ENCODE measurements at regions of chr5 and their contacts with region 1.

Region 1: DNA sequence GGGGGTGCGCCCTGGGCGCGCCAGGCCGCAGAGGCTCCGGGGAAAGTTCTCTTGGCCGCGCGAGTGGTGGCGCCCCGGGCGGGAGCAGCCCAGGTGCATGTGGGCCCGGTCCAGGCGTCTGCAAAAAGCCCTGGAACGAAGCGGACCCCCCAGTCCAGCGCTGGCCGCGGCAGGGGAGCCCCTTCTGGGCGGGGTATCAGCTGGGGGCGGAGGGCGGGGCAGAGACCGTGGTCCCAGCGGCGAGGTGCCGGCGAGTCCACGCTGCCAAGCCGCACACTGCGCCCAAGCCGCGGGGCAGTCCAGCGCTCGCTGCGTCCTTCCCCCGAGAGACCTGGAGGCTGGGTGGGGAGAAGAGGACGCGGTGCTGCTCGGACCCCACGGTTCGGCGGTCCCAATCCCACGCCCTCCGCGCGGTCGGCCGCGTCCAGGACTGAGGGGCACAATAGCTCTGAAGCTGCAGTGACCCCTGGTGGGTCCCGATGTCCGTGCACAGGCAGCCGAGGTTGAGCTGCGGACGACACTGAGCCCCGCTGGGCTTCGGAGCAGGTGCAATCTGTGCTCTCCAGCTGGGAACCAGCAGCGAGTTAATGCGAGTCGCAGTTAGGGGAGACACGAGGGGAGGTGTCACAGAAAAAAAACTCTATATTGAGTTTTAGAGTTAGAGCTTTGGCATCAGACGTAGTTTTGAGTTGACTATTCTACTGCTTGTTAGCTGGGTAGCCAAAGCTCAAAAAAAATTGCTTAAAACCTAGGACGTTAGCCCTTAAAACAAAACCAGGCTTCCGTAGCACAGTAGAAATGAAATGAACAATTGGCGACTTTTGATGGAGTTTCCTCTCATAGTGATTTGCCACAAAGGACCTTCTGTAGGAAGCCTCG is 1.1 kb upstream of the EPB41L4A start:
- DNase-seq: peak in 1 of 2 donors; percentile 90
- H3K4me3 ChIP-seq: peak overlapping the region; percentile 82 to 91
- H3K27ac ChIP-seq: peak overlapping the region; percentile 88
- H3K4me1 ChIP-seq: peaks cover 5% of the 10 kb centered on the region
- H3K27me3 ChIP-seq: no peaks in the 10 kb centered on the region
- CTCF ChIP-seq: peak; percentile 37 to 97 (median 91)
- POLR2A ChIP-seq: no peak

Region 2: GRCh38 chr5:112208699-112209615 is 211.3 kb before region 1 on chr5:
- intact Hi-C with region 1: loop called (anchors 10 kb)
- DNase-seq: no peak
- H3K4me3 ChIP-seq: no peak overlapping the region
- H3K27ac ChIP-seq: no peak overlapping the region
- H3K4me1 ChIP-seq: no peaks in the 10 kb centered on the region
- H3K27me3 ChIP-seq: no peaks in the 10 kb centered on the region
- CTCF ChIP-seq: no peak
- POLR2A ChIP-seq: no peak